ENCODE measurements at regions of chr7 and their contacts with region 1.

Region 1: DNA sequence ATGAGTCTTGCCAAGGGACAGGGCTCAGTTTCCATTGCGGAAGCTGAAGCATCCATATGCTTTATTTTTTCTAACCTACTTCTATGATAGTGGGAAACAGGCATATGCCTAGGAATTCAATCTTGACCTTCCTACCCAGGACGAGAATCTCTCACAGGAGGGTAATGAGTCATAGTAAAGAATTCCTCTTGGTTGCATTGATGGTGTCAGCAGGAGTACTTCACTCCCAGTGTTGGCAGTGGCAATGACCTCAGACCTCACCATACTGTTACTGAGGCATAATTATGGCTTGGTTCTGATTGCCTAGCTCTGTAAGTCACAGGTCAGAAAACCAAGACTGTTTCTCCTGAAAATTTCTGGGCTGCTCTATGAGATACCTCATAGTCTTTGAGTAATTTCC is 552.9 kb downstream of the ARL4A start:
- DNase-seq: peak; percentile 63

Region 2: DNA sequence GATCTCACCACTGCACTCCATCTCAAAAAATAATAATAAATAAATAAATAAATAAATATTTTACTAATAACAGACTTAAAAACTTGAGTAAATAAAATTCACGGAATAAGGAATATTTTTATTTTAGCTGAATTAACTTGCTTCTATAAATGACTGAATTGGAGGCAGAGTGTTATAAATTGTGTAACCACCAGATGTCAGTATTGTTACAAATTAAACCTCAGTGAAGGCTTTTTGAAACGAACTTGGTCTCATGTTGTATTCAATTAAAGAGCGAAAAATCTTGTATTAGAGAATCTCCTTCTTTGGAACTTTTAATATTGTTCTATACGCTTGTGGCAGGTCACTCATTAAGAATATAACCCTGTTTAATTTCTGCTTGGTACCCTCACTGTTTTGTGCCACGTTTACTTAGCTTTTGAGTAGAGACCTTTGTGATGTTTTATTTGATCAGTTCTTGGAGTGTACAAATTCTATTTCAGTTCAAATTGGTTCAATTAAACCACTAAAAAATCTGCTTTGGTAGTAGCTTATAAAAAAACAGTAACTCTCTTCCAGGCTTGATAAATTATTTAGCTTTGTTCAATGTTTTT is 715.5 kb before region 1 on chr7:
- in situ Hi-C with region 1: loop called (anchors 25 kb)
- DNase-seq: peak; percentile 47

Region 3: GRCh38 chr7:13159467-13160184 is 80.7 kb before region 1 on chr7:
- in situ Hi-C with region 1: no loop called
- DNase-seq: no peak

Region 4: DNA sequence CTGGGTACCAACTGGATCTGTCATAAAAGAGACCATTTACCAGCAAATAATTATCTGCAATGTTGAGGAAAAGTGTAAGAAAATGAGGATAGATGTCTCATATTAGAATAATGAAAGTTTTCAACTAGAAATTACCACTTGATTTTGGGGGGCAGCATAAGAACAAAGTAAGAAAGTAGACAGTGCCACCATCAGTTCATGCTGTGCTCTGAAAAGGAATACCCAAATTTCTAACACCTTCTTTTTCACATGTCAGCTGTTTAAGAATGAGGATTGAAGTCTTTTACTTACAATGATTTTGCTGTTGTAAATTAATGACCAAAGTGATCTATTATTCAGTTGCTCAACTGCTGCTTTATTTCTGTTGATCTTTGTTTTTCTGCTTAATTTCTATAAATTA is 170.8 kb after region 1 on chr7:
- in situ Hi-C with region 1: no loop called
- DNase-seq: no peak